Dendritic cell treated with granulocyte-macrophage colony-stimulating factor and Interleukin-4, amounts not matched to agents 40 ng/mL and 50 ng/mL, for 4 days (primary cell): ENCODE measurements at regions of chr15 and their contacts with region 1.

Region 1: GRCh38 chr15:78087951-78088772 is 4.2 kb upstream of the SH2D7 start:
- H3K4me3 Mint-ChIP-seq: peak overlapping the region; percentile 20
- H3K27ac Mint-ChIP-seq: peak overlapping the region; percentile 95
- H3K4me1 Mint-ChIP-seq: peaks cover 49% of the 10 kb centered on the region
- H3K27me3 Mint-ChIP-seq: no peaks in the 10 kb centered on the region

Region 2: GRCh38 chr15:78049691-78050440 is 38.3 kb before region 1 on chr15:
- intact Hi-C with region 1: loop called (anchors 5 kb)
- H3K4me3 Mint-ChIP-seq: peak overlapping the region; percentile 11
- H3K27ac Mint-ChIP-seq: peak overlapping the region; percentile 74
- H3K4me1 Mint-ChIP-seq: peaks cover 91% of the 10 kb centered on the region
- H3K27me3 Mint-ChIP-seq: no peaks in the 10 kb centered on the region

Region 3: GRCh38 chr15:78182821-78183220 is 94.7 kb after region 1 on chr15:
- intact Hi-C with region 1: no loop called
- H3K4me3 Mint-ChIP-seq: no peak overlapping the region
- H3K27ac Mint-ChIP-seq: no peak overlapping the region
- H3K4me1 Mint-ChIP-seq: no peaks in the 10 kb centered on the region
- H3K27me3 Mint-ChIP-seq: peaks cover 7% of the 10 kb centered on the region